ENCODE measurements at regions of chr16 and their contacts with region 1.

Region 1: GRCh38 chr16:85514595-85515318 is 98.4 kb upstream of the GSE1 start:
- DNase-seq: peak; percentile 87 to 95
- H3K4me3 ChIP-seq: peak overlapping the region; percentile 46; the same call in 1 of the 2 replicates
- H3K27ac ChIP-seq: peak overlapping the region; percentile 93
- H3K4me1 ChIP-seq: peaks cover 44% of the 10 kb centered on the region
- H3K27me3 ChIP-seq: no peaks in the 10 kb centered on the region
- CTCF ChIP-seq: no peak; the same call in 1 of the 2 replicates

Region 2: DNA sequence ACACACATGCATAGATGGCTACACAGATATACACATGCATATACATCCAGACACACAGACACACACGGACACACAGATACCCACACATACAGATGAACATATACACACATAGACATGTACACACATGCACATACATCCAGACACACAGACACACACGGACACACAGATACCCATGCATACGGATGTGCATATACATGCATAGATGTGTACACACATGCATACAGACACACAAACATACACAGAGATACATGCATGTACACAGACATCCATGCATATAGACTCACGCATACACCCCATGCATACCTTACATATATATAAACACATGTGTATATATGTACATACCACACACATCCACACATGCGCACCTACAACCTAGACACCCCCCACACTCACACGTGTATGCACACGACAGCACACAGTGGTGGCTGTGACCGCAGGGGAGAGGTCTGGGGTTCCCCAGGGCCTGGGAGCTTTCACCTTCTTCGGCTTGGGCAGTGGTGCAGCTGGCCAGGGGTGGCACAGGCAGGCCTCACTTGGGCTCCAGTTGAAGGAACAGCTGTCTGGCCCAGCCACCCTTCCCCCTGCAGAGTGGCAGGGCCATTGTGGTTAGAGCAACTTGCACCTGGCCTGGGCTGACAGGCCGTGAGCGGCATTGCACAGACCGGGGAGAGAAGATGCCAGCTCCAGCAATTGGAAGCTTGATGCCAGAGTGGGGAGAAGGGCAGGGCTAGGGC is 16.3 kb before region 1 on chr16:
- CTCF ChIA-PET with region 1: interaction called, 11 read pairs
- POLR2A ChIA-PET with region 1: no interaction called
- intact Hi-C with region 1: no loop called
- DNase-seq: no peak
- H3K4me3 ChIP-seq: no peak overlapping the region
- H3K27ac ChIP-seq: no peak overlapping the region
- H3K4me1 ChIP-seq: no peaks in the 10 kb centered on the region; the same call in 1 of the 2 replicates
- H3K27me3 ChIP-seq: no peaks in the 10 kb centered on the region
- CTCF ChIP-seq: no peak

Region 3: DNA sequence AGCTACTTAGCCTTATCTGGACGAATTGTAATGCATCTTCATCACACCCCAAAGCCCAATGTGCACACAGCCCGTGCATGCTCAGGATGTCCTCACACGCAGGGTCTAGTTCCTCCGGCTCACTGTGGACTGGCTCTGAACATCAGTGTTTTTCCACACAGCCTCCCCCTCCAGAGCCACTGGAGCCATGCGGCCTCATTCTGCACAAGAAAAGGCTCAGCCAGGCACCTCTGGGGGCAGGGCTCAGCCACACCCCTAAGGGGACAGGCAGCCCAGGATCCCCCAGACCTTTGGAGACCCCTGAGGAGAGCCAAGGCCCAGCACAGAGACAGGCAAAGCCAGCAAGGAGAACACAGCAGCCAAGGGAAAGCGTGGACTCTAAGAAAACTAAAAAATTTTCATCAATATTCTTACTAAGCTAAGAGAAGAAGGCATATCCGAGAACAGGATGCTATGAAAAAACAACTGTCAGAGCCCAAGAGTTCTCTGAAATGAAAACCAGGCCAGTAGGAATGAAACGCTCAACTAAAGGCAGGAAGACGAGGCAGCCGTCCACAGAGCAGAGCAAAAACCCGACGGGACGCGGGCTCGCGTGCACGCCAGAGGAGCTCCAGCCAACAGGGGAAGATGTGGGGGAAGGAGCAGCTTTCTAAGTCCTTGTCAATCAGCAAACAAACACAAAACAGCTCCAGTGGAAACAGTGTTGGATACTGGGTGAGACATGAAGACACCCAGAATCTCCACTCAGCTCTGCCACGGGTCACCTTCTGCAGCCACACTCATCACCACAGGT is 1911.9 kb after region 1 on chr16:
- CTCF ChIA-PET with region 1: no interaction called
- POLR2A ChIA-PET with region 1: no interaction called
- intact Hi-C with region 1: no loop called
- DNase-seq: no peak
- H3K4me3 ChIP-seq: no peak overlapping the region
- H3K27ac ChIP-seq: no peak overlapping the region
- H3K4me1 ChIP-seq: no peaks in the 10 kb centered on the region
- H3K27me3 ChIP-seq: no peaks in the 10 kb centered on the region
- CTCF ChIP-seq: no peak